ENCODE measurements at regions of chr3 and their contacts with region 1.

Region 1: GRCh38 chr3:47324278-47324865 is 41.6 kb downstream of the KLHL18 start:
- DNase-seq: peak; percentile 72 to 80
- H3K4me3 ChIP-seq: no peak overlapping the region
- H3K4me3 Mint-ChIP-seq: no peak overlapping the region
- H3K27ac Mint-ChIP-seq: no peak overlapping the region
- H3K4me1 ChIP-seq: peaks cover 9% of the 10 kb centered on the region
- H3K4me1 Mint-ChIP-seq: peaks cover 11% of the 10 kb centered on the region
- H3K27me3 ChIP-seq: no peaks in the 10 kb centered on the region
- H3K27me3 Mint-ChIP-seq: no peaks in the 10 kb centered on the region
- CTCF ChIP-seq: peak; percentile 65 to 74

Region 2: DNA sequence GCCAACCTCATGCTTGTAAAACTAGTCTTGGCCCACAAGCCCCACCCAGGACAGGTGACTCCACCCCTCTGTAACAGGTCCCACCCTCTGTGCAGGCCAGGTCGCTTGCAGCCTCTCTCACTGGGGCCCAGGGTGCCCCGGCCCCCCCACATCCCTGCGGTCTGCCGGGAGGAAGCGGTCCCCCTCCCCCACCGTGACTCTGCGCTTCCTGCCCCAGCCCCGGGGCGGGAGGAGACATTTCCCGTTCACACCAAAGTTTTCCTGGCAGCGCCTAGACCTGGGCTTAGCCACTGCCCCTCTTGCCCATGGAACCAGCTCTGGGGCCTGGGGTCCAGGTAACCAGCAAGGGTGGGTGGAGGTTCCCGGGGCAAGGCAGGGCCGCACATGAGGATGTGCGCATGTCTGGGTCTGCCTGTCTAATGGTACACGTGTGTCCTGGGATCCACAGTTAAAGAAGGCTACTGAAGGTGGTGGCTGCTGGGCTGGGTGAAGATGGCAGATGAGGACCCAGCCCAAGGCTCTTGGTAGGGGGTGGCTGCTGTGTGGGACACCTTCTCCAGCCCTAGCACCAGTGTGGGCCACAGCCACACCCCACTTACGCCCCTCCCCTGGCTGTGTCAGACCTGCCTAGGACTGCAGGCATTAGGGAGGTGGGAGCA is 336.5 kb before region 1 on chr3:
- CTCF ChIA-PET with region 1: no interaction called
- POLR2A ChIA-PET with region 1: no interaction called
- intact Hi-C with region 1: no loop called
- DNase-seq: no peak
- H3K4me3 ChIP-seq: no peak overlapping the region
- H3K4me3 Mint-ChIP-seq: no peak overlapping the region
- H3K27ac Mint-ChIP-seq: no peak overlapping the region
- H3K4me1 ChIP-seq: peaks cover 16% of the 10 kb centered on the region
- H3K4me1 Mint-ChIP-seq: peaks cover 14% of the 10 kb centered on the region
- H3K27me3 ChIP-seq: no peaks in the 10 kb centered on the region
- H3K27me3 Mint-ChIP-seq: no peaks in the 10 kb centered on the region
- CTCF ChIP-seq: no peak

Region 3: DNA sequence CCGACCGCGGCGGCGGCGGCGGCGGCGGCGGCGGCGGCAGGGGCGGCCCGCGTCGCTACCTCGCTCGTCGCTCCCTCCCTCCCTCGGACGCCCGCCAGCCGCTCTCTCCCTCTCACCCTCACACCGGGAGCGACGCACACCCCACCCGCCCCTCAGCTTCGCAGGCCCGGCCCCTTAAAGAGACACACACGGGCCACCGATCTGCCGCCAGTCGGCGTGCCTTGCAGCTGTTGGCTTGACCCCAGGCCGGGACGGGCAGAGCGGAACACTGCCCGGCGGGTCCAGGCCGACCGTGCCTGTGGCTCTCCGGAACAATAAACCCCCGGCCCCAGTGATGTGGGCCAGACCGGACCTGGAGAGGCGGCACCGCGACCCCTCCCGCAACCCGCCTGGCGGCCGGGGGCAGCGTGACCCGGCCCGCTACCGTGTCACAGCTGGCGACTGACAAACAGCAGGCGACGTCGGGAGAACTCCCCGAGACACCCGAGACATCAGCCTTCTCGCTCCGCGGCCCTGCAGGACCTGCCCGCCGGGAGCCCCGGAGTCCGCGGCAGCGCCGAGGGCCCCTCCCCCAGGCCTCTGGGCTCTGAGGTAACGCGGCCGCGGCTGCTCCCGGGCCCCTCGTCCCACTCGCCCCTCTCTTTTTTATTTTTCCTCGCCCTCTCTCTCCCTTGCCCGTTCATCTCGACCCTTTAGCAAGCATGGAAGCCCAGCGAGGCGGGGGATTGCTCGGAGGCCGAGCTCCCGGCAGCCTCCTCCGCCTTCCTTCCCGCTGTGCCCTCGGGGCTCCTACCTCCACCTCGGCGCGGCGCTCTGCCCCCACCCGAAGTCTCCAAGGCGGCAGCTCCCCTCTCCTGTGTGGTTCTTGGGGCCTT is 160.1 kb before region 1 on chr3 and contains the start of gene SETD2:
- CTCF ChIA-PET with region 1: interaction called, 4 read pairs
- POLR2A ChIA-PET with region 1: no interaction called
- intact Hi-C with region 1: loop called (anchors 1 kb)
- DNase-seq: peak; percentile 94 to 96
- H3K4me3 ChIP-seq: peak within 1 kb of the TSS; percentile 95
- H3K4me3 Mint-ChIP-seq: peak within 1 kb of the TSS; percentile 78
- H3K27ac Mint-ChIP-seq: peak within 1 kb of the TSS; percentile 81
- H3K4me1 ChIP-seq: peaks cover 10% of the 10 kb centered on the region; the same call in 1 of the 2 replicates
- H3K4me1 Mint-ChIP-seq: peaks cover 25% of the 10 kb centered on the region
- H3K27me3 ChIP-seq: no peaks in the 10 kb centered on the region
- H3K27me3 Mint-ChIP-seq: no peaks in the 10 kb centered on the region
- CTCF ChIP-seq: peak in 1 of 2 experiments; percentile 36
- total RNA-seq, gene SETD2: 47.6 and 48.8 TPM in 2 replicates

Region 4: DNA sequence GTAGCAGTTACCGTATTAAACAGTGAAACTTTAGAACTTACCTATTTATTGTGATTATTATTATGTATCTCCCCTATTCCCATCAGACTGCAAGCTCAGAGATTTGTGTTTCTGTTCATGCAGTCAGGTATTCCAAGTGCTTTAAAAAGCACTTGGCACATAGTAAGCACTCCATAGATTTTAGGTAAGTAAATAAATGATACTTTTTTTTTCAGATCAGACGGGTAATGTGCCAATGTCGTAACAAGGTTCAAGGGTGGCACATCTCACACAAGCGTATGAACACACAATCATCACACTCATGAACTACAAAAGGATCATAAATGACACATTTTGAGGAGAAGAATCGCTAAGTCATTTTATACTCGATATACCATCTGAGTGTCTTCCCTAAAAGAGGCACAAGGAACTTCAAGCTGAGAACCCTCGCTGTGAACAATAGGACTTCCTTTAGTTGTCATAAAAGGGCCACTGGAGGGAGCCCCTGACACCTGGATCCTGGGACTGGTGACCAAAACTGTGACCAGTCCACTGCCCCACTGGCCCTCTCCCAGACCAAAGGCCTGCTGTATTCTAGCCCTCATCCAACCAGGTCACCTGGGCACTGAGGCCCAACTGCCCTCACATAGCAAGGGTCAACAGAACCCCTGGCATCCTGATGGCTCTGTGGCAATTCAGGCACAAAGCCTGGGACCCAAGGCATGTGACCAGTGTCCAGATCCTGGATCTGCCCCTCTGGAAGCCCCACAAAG is 73.9 kb before region 1 on chr3:
- CTCF ChIA-PET with region 1: interaction called, 11 read pairs
- POLR2A ChIA-PET with region 1: no interaction called
- intact Hi-C with region 1: loop called (anchors 1 kb)
- DNase-seq: peak; percentile 62
- H3K4me3 ChIP-seq: no peak overlapping the region
- H3K4me3 Mint-ChIP-seq: no peak overlapping the region
- H3K27ac Mint-ChIP-seq: no peak overlapping the region
- H3K4me1 ChIP-seq: no peaks in the 10 kb centered on the region
- H3K4me1 Mint-ChIP-seq: no peaks in the 10 kb centered on the region
- H3K27me3 ChIP-seq: no peaks in the 10 kb centered on the region
- H3K27me3 Mint-ChIP-seq: no peaks in the 10 kb centered on the region
- CTCF ChIP-seq: peak; percentile 52 to 56

Region 5: GRCh38 chr3:47296562-47297302 is 27.6 kb before region 1 on chr3:
- CTCF ChIA-PET with region 1: no interaction called
- POLR2A ChIA-PET with region 1: no interaction called
- intact Hi-C with region 1: no loop called
- DNase-seq: no peak
- H3K4me3 ChIP-seq: no peak overlapping the region
- H3K4me3 Mint-ChIP-seq: no peak overlapping the region
- H3K27ac Mint-ChIP-seq: no peak overlapping the region
- H3K4me1 ChIP-seq: no peaks in the 10 kb centered on the region
- H3K4me1 Mint-ChIP-seq: no peaks in the 10 kb centered on the region
- H3K27me3 ChIP-seq: no peaks in the 10 kb centered on the region
- H3K27me3 Mint-ChIP-seq: no peaks in the 10 kb centered on the region
- CTCF ChIP-seq: no peak

Region 6: GRCh38 chr3:47370887-47371697 is 46.7 kb after region 1 on chr3:
- CTCF ChIA-PET with region 1: interaction called, 3 read pairs
- POLR2A ChIA-PET with region 1: no interaction called
- intact Hi-C with region 1: loop called (anchors 1 kb)
- DNase-seq: no peak
- H3K4me3 ChIP-seq: no peak overlapping the region
- H3K4me3 Mint-ChIP-seq: no peak overlapping the region
- H3K27ac Mint-ChIP-seq: no peak overlapping the region
- H3K4me1 ChIP-seq: no peaks in the 10 kb centered on the region
- H3K4me1 Mint-ChIP-seq: peaks cover 15% of the 10 kb centered on the region
- H3K27me3 ChIP-seq: no peaks in the 10 kb centered on the region
- H3K27me3 Mint-ChIP-seq: no peaks in the 10 kb centered on the region
- CTCF ChIP-seq: peak; percentile 31 to 51

Region 7: DNA sequence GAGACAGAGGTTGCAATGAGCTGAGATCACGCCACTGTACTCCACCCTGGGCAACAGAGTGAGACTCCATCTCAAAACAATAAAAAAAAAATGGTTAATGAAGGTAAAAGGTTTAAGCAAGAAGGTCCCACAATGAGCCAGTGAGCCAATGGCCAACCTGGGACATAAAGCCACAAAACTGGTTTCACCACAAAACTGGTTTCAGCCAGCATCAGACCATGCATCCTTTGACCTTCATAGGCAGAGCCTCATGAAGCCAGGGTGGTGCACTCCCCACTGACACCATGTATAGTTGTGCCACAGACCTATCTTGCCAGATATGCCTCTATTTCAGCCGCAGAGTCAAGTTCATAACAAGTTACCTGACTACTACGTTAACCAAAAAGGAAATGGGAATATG is 109.4 kb after region 1 on chr3:
- CTCF ChIA-PET with region 1: no interaction called
- POLR2A ChIA-PET with region 1: no interaction called
- intact Hi-C with region 1: no loop called
- DNase-seq: peak in 1 of 2 experiments; percentile 54
- H3K4me3 ChIP-seq: no peak overlapping the region
- H3K4me3 Mint-ChIP-seq: peak overlapping the region; percentile 18
- H3K27ac Mint-ChIP-seq: peak overlapping the region; percentile 22
- H3K4me1 ChIP-seq: peaks cover 30% of the 10 kb centered on the region
- H3K4me1 Mint-ChIP-seq: peaks cover 32% of the 10 kb centered on the region
- H3K27me3 ChIP-seq: no peaks in the 10 kb centered on the region
- H3K27me3 Mint-ChIP-seq: no peaks in the 10 kb centered on the region
- CTCF ChIP-seq: no peak

Measured in Caco-2 (cell line).